ENCODE measurements at regions of chr3 and their contacts with region 1.

Region 1: GRCh38 chr3:104521606-104522336 is 844.9 kb upstream of the ALCAM start:
- DNase-seq: peak; percentile 49
- ATAC-seq: peak; percentile 51
- H3K4me3 Mint-ChIP-seq: peak overlapping the region; percentile 75
- H3K27ac Mint-ChIP-seq: peak overlapping the region; percentile 98
- H3K4me1 Mint-ChIP-seq: peaks cover 73% of the 10 kb centered on the region
- H3K27me3 Mint-ChIP-seq: no peaks in the 10 kb centered on the region
- CTCF ChIP-seq: no peak

Region 2: DNA sequence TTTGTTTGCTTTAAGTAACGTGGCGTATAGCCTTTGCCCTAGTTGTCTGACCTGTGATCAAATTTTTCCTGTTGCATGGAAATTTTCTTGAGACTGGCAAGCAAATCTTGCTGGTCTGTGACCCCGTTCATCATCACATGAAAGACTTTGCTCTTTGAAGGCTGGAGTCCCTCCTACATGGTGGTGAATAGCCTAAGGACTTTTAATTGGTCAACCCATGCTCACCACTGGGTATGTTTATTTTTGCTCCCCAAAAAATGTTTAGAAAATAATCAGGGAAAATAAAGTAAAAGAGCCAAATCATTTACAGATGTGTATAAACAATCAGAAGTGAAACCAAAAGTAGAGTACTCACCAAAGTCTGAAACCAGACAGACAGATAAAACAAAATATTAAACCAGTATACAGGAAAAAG is 230.3 kb before region 1 on chr3:
- CTCF ChIA-PET with region 1: no interaction called
- POLR2A ChIA-PET with region 1: no interaction called
- intact Hi-C with region 1: loop called (anchors 10 kb)
- DNase-seq: no peak
- ATAC-seq: peak; percentile 47
- H3K4me3 Mint-ChIP-seq: peak overlapping the region; percentile 48
- H3K27ac Mint-ChIP-seq: peak overlapping the region; percentile 31
- H3K4me1 Mint-ChIP-seq: peaks cover 16% of the 10 kb centered on the region
- H3K27me3 Mint-ChIP-seq: no peaks in the 10 kb centered on the region
- CTCF ChIP-seq: no peak

Region 3: DNA sequence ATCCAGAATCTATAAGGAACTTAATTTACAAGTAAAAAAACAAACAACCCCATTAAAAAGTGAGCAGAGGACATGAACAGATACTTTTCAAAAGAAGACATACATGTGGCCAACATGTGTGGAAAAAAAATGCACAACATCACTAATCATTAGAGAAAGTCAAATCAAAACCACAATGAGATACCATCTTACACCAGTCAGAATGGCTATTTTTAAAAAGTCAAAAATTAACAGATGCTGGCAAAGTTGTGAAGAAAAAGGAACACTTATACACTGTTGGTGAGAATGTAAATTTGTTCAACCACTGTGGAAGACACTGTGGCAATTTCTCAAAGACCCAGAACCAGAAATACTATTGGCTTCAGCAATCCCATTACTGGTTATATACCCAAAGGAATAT is 14.9 kb after region 1 on chr3:
- CTCF ChIA-PET with region 1: no interaction called
- POLR2A ChIA-PET with region 1: interaction called, 9 read pairs
- intact Hi-C with region 1: loop called (anchors 1 kb)
- DNase-seq: no peak
- ATAC-seq: peak; percentile 50
- H3K4me3 Mint-ChIP-seq: no peak overlapping the region
- H3K27ac Mint-ChIP-seq: peak overlapping the region; percentile 4
- H3K4me1 Mint-ChIP-seq: peaks cover 23% of the 10 kb centered on the region
- H3K27me3 Mint-ChIP-seq: no peaks in the 10 kb centered on the region
- CTCF ChIP-seq: no peak

Region 4: DNA sequence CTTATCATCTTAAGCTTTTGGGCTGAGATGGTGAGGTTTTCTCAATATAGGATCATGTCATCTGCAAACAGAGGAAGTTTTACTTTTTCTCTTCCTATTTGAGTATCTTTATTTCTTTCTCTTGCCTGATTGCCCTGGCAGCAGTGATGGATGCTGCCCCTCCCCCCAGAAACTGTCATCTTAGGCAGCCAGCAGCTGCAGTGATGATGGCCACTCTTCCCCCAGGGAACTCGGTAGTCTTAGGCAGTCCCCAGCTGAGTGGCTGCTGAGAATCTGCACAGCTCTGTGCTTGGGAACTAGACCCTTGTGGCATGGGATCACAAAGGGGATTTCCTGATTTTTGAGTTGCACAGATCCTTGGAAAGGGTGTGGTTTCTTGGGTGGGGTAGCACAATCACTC is 53.9 kb after region 1 on chr3:
- CTCF ChIA-PET with region 1: no interaction called
- POLR2A ChIA-PET with region 1: no interaction called
- intact Hi-C with region 1: no loop called
- DNase-seq: no peak
- ATAC-seq: no peak
- H3K4me3 Mint-ChIP-seq: no peak overlapping the region
- H3K27ac Mint-ChIP-seq: no peak overlapping the region
- H3K4me1 Mint-ChIP-seq: no peaks in the 10 kb centered on the region
- H3K27me3 Mint-ChIP-seq: no peaks in the 10 kb centered on the region
- CTCF ChIP-seq: no peak

Region 5: DNA sequence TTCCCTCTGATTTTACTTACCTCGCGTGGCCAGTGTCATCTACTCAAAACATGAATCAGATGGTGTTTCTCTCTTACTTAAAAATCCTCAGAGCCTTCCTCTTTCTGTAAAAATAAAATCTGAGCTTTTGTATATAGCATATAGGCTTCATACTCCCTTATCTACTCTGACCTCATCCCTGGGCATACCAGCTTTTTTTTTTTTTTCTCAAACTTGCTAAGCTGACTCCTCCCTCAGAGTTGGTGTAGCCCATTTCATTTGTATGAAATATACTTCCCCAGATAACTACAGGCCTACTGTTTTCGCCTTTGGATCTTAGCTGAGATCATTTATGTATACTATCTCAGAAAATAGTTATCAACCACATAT is 196.0 kb after region 1 on chr3:
- CTCF ChIA-PET with region 1: no interaction called
- POLR2A ChIA-PET with region 1: interaction called, 4 read pairs
- intact Hi-C with region 1: loop called (anchors 1 kb)
- DNase-seq: no peak
- ATAC-seq: peak; percentile 70
- H3K4me3 Mint-ChIP-seq: peak overlapping the region; percentile 74
- H3K27ac Mint-ChIP-seq: peak overlapping the region; percentile 93
- H3K4me1 Mint-ChIP-seq: peaks cover 29% of the 10 kb centered on the region
- H3K27me3 Mint-ChIP-seq: no peaks in the 10 kb centered on the region
- CTCF ChIP-seq: no peak